ENCODE measurements at regions of chr2 and their contacts with region 1.

Region 1: GRCh38 chr2:102240640-102241370 is 54.0 kb downstream of the IL1RL2 start:
- DNase-seq: peak; percentile 65 to 94
- ATAC-seq: peak; percentile 99
- H3K4me3 ChIP-seq: no peak overlapping the region
- H3K27ac ChIP-seq: peak overlapping the region; percentile 76 to 79
- H3K4me1 ChIP-seq: peaks cover 17% of the 10 kb centered on the region
- CTCF ChIP-seq: peak; percentile 98
- EP300 ChIP-seq: no peak
- POLR2A ChIP-seq: no peak
- RAD21 ChIP-seq: peak; percentile 98 to 100

Region 2: DNA sequence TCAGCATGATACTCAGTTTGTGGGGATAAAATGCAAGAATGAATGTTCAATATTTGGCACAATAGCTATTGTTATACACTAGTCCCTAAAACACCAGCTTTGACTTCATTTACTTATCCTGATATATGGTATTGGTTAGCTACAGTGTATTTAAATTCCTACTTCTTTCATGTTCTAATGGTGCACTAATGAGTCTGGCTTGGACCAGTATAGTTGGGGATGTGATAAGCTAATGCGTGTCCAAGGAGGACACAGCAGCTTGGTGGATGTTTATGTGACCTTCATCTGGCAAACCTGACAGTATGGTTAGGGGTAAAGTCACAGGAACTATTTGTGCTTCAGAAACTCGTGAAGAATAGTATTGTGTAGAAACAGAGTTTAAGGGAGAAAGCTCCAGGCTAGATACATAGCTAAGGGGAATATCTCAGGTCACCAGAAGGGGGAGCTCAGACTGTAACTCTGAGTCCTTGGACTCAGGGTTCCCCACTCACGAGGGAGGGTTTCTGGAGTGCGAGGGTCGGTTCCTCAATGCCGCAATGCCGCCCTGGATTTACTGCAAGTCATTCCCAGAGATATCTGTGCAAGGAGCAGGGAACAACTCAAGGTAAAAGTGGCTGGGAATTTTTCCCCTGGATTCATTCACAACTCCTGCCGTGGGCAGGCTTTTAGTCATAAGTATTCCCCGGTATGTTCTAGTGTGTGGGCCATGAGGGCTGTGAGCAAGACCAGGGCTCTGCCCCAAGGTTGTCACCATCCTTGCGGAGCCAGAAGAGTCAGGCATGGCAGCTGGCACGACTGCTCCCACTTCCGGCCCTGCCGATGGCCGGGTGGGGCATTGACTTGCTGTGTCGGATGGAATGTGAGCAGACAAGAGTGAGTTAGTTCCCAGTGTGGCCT is 234.6 kb before region 1 on chr2:
- CTCF ChIA-PET with region 1: interaction called, 137 read pairs
- POLR2A ChIA-PET with region 1: interaction called, 4 read pairs
- DNase-seq: peak; percentile 43 to 52
- ATAC-seq: peak; percentile 86 to 98
- H3K4me3 ChIP-seq: no peak overlapping the region
- H3K27ac ChIP-seq: peak overlapping the region in 1 of 2 experiments; percentile 45; a peak in 1 of 6 replicates
- H3K4me1 ChIP-seq: peaks cover 4% of the 10 kb centered on the region; the same call in 1 of the 3 replicates
- CTCF ChIP-seq: peak; percentile 72
- EP300 ChIP-seq: no peak
- POLR2A ChIP-seq: no peak
- RAD21 ChIP-seq: peak; percentile 70 to 71

Region 3: DNA sequence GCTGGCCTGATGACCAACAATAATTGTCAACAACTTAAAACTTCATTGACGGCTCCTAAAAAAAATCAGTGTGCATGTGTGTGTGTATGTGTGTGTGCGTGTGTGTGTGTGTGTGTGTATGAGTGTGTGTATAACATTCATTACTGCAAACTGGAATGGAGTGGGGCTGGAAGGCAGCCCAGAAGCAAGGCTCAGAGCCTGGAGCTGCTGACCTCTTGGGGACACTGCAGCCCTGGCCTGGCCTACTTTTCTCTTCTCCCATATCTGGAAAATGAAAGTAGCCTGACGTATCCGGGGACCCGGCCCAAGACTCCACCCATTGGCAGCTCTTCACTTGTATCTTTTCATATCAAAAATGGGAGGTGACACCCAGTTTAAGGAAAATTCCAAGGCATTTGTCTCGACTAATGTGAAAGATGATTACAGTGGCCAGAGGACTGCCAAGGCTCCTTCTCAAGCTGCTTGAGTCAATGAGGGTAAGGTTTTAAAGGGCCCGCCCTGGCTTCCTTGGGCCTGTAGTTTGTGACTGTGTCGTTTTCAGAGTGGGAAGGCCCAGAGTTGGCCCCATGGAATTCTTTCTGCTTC is 170.7 kb before region 1 on chr2:
- CTCF ChIA-PET with region 1: interaction called, 10 read pairs
- POLR2A ChIA-PET with region 1: interaction called, 8 read pairs
- DNase-seq: peak; percentile 66 to 93
- ATAC-seq: peak; percentile 78 to 85
- H3K4me3 ChIP-seq: peak overlapping the region; percentile 33
- H3K27ac ChIP-seq: peak overlapping the region; percentile 90 to 98
- H3K4me1 ChIP-seq: peaks cover 58% of the 10 kb centered on the region
- CTCF ChIP-seq: peak; percentile 49
- EP300 ChIP-seq: no peak
- POLR2A ChIP-seq: no peak
- RAD21 ChIP-seq: peak; percentile 66 to 81

Region 4: DNA sequence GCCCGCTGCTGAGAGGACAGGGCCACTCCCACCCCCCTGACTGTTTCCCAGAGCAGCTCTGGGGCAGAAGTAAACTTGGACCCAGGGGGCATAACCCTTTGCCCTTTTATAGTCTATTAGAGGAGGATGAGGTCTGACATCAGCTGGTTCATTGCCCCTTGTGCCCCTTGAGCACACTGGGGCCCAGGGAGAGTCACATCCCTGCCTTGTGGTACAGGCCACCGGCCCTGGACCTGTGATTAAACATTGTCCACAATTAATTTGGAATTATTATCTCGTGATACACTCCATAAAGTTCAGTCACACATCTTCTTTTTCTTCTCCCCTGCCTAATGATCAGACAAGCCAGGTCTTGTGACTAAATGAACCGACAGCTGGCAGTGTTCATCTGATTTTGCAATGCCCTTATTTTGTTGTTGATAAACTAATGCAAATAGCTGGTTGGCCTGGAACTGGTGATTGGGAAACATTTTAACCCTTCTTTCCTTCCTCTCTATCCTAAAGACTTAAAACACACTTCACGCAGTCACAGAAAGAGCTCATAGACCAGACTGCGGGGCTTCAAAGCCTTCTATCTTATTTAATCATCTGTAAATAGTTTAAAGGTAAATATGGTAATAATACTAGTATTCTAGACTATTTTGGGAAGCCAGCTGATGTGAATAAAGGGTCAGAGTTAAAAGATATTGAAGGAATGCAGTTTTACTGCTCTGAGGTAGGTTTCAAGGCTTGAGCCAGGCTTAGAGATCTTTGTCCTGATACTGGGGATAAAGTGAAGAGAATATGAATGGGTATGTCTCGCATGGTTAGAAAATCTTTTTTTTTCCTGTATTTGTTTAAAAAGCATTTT is 84.9 kb before region 1 on chr2:
- CTCF ChIA-PET with region 1: interaction called, 16 read pairs
- POLR2A ChIA-PET with region 1: no interaction called
- DNase-seq: no peak
- ATAC-seq: no peak
- H3K4me3 ChIP-seq: no peak overlapping the region
- H3K27ac ChIP-seq: peak overlapping the region; percentile 29 to 53; a peak in 4 of 6 replicates
- H3K4me1 ChIP-seq: peaks cover 11% of the 10 kb centered on the region; the same call in 2 of the 3 replicates
- CTCF ChIP-seq: no peak
- EP300 ChIP-seq: no peak
- POLR2A ChIP-seq: no peak
- RAD21 ChIP-seq: no peak

Region 5: DNA sequence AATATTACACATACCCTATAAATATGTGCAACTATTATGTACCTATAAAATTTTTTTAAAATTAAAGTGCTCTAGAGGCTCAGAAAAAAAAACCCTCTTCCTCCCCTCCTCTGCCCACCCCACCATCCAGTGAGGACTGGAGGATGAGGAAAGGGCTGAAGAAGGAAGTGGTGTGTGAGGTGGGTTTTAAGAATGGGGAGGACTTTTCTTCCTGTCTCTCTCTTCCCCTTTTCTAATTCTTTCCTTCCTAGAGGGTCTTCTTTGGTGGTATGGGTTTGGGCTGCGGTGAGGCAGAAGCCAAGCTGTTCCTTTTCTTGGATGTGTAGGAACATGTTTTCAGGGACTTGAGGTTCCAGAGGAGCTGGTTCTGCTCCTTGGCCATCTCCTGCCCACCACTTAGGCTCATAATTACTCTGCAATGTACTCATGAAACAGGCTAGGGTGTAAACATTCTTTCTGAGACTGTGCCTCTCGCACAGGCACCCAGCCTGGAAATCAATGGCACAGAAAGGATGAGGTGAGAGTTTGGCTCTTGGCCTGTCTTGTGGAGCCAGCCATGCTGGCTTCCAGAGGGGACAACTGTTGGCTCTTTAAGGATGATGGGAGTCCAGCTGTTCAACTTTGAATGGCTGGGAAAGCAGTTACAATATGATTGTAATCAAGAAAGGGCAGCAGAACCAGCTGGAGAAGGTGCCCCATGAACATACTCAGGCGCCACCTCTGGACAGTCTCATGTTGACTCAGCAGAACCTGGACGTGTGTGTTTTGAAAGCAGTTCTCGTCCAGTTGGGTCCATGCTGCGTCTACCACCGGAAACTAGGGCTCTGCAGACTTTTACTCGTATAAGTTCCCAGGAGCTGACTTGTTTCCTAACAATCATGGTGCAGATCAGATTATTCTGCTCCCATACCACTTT is 15.7 kb before region 1 on chr2:
- CTCF ChIA-PET with region 1: interaction called, 10 read pairs
- POLR2A ChIA-PET with region 1: no interaction called
- DNase-seq: peak in 1 of 2 experiments; percentile 16
- ATAC-seq: no peak
- H3K4me3 ChIP-seq: no peak overlapping the region
- H3K27ac ChIP-seq: peak overlapping the region; percentile 4 to 91; a peak in 2 of 6 replicates
- H3K4me1 ChIP-seq: peaks cover 31% of the 10 kb centered on the region
- CTCF ChIP-seq: no peak
- EP300 ChIP-seq: no peak
- POLR2A ChIP-seq: no peak
- RAD21 ChIP-seq: no peak

Region 6: DNA sequence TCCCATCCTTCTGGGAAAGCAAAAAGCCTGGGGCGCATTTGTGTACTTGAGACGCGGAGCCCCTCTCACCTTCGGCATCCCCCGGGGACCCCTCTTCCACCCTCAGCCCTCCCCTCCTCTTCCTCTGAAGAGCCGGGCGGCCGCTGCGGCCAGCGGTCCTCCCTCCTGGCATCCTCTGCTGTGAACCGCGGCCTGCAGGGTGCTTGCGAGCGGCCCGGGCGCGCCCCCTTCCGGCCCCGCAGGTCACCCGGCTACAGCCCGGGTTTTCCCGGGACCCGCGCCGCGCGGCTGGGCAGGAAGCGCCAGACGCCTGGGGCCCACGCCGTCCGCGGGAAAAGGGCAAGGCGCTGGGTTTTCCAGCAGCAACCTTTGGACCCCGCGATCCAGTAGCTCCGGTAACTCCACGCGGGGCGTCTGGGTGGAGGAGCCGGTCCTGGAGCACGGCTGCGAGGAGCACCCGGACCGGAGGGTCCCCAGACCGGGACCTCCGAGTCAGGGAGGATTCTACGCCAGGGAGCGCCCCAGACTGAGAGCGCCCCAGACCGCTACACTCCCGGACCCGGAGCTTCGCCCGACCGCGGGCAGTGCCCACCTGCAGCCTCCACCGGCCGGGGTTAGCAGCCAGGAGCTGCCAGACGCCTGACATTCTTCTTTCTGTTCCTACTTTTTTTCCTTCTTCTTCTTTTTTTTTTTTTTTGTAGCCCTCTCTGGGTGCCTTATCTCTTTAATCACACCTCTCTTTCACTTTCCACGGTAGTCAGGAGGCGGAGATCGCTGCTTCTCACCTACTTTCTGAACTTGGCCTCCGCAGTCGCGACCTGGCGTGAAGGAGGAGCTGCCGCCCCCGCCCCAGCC is 114.9 kb after region 1 on chr2 and contains the start of gene IL18R1:
- CTCF ChIA-PET with region 1: no interaction called
- POLR2A ChIA-PET with region 1: no interaction called
- DNase-seq: peak; percentile 58 to 73
- ATAC-seq: peak; percentile 100
- H3K4me3 ChIP-seq: peak within 1 kb of the TSS; percentile 57
- H3K27ac ChIP-seq: peak within 1 kb of the TSS; percentile 76 to 94
- H3K4me1 ChIP-seq: no peaks in the 10 kb centered on the region
- CTCF ChIP-seq: peak; percentile 86
- EP300 ChIP-seq: no peak
- POLR2A ChIP-seq: no peak
- RAD21 ChIP-seq: peak; percentile 76 to 90
- polyA plus RNA-seq, gene IL18R1: 2.6 and 3.5 TPM in 2 replicates

Region 7: DNA sequence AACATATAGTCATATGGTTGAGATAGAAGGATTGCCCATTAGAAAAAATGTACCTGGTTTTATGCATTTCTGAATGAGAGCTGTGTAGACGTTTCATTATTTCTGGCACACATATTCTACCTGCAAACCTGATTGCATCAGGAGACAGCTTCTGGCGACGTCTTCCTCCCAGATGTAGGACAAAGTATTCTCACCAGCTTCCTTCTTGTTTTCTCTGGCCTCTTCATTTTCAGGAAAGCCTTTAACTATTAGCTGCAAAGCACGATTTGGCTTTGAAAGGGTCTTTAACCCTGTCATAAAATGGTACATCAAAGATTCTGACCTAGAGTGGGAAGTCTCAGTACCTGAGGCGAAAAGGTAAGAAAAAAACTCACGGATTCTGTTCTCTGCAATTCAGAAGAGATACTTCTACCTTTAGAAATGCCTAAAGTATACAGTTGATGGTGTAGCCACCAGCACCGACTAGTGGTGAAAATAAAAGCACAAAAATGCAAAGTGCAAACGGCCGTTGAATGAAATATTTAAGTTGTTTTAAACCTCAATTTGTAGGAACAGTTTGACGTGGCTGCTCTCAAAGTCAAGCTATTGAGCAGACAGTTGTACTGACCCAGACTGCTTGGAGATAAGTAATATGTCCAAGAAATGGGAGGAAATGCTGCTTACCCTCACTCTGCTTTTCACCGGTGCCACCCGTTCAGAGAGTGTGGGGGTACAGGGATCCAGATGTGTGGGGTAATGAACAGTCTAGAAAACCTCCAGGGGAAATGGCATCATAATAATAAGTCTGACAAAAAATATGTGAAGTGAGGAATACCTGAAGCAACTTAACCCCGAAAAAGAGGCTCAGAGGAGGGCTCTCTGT is 202.4 kb after region 1 on chr2:
- CTCF ChIA-PET with region 1: interaction called, 13 read pairs
- POLR2A ChIA-PET with region 1: no interaction called
- DNase-seq: peak; percentile 13 to 43
- ATAC-seq: peak; percentile 81 to 82
- H3K4me3 ChIP-seq: no peak overlapping the region
- H3K27ac ChIP-seq: no peak overlapping the region
- H3K4me1 ChIP-seq: no peaks in the 10 kb centered on the region
- CTCF ChIP-seq: peak; percentile 80
- EP300 ChIP-seq: no peak
- POLR2A ChIP-seq: no peak
- RAD21 ChIP-seq: peak; percentile 72 to 76

Measured in A549 (cell line).